ENCODE measurements at regions of chr1 and their contacts with region 1.

Region 1: GRCh38 chr1:1079408-1080121 is 5.5 kb upstream of the RNF223 start:
- DNase-seq: peak; percentile 97
- H3K4me3 Mint-ChIP-seq: peak overlapping the region; percentile 69
- H3K27ac Mint-ChIP-seq: peak overlapping the region; percentile 76
- H3K4me1 Mint-ChIP-seq: peaks cover 4% of the 10 kb centered on the region
- H3K27me3 Mint-ChIP-seq: no peaks in the 10 kb centered on the region
- CTCF ChIP-seq: no peak

Region 2: DNA sequence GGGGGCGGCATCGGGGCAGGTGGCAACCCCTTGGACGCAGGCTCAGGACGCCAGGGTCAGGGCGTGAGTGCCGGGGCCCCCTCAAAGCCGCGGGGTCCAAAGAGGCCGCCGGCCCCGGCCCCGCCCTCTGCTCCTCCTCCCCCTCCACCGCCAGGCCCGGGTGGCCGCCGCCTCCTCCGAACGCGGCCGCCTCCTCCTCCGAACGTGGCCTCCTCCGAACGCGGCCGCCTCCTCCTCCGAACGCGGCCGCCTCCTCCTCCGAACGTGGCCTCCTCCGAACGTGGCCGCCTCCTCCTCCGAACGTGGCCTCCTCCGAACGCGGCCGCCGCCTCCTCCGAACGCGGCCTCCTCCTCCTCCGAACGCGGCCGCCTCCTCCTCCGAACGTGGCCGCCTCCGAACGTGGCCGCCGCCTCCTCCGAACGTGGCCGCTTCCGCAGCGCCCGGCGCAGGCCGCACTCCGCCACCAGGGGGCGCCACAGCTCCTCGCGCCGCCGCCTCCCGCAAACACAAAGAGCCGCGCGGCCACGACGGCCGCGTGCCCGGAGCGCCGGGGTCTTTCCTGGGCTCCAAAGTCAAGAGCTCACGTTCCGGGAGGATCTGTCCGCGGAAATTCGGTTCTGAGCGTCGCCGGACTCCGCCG is 175.1 kb before region 1 on chr1:
- CTCF ChIA-PET with region 1: no interaction called
- POLR2A ChIA-PET with region 1: no interaction called
- intact Hi-C with region 1: no loop called
- DNase-seq: peak; percentile 79
- H3K4me3 Mint-ChIP-seq: peak overlapping the region; percentile 82
- H3K27ac Mint-ChIP-seq: peak overlapping the region; percentile 63
- H3K4me1 Mint-ChIP-seq: peaks cover 19% of the 10 kb centered on the region
- H3K27me3 Mint-ChIP-seq: peaks cover 12% of the 10 kb centered on the region
- CTCF ChIP-seq: peak; percentile 96

Region 3: GRCh38 chr1:1115786-1116700 is 36.5 kb after region 1 on chr1 and contains the start of gene C1orf159:
- CTCF ChIA-PET with region 1: no interaction called
- POLR2A ChIA-PET with region 1: interaction called, 6 read pairs
- intact Hi-C with region 1: loop called (anchors 1 kb)
- DNase-seq: peak; percentile 97
- H3K4me3 Mint-ChIP-seq: peak within 1 kb of the TSS; percentile 83
- H3K27ac Mint-ChIP-seq: peak within 1 kb of the TSS; percentile 83
- H3K4me1 Mint-ChIP-seq: no peaks in the 10 kb centered on the region
- H3K27me3 Mint-ChIP-seq: no peaks in the 10 kb centered on the region
- CTCF ChIP-seq: no peak
- total RNA-seq, gene C1orf159: 15.7 and 18.6 TPM in 2 replicates

Region 4: GRCh38 chr1:1441002-1441888 is 361.7 kb after region 1 on chr1:
- CTCF ChIA-PET with region 1: no interaction called
- POLR2A ChIA-PET with region 1: no interaction called
- intact Hi-C with region 1: no loop called
- DNase-seq: peak; percentile 42
- H3K4me3 Mint-ChIP-seq: no peak overlapping the region
- H3K27ac Mint-ChIP-seq: no peak overlapping the region
- H3K4me1 Mint-ChIP-seq: no peaks in the 10 kb centered on the region
- H3K27me3 Mint-ChIP-seq: no peaks in the 10 kb centered on the region
- CTCF ChIP-seq: peak; percentile 89